Natural killer cell (primary cell): ENCODE measurements at regions of chr11 and their contacts with region 1.

Region 1: DNA sequence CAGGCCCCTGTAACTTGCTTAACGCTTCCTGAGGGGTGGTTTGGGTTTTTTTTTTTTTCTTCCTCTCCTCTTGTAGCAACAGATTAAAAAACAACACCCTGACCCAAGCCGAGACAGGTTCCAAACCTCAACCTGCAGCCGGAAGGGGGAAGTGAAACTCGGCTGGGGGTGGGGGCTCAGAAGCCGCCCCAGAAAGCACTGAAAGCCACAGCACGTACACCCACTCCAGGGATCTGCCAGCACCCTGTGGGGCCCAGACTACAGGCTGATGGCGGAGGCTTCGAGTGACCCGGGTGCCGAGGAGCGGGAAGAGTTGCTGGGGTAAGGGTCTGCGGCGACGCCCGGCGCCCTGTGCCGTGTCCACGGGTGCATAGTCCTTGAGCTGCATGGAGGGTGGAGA is at the start of gene LSP1:
- DNase-seq: peak; percentile 76 to 93
- ATAC-seq: peak; percentile 57 to 77 (median 71)
- H3K4me3 ChIP-seq: peak within 1 kb of the TSS; percentile 91
- H3K4me3 Mint-ChIP-seq: peak within 1 kb of the TSS; percentile 100
- H3K27ac ChIP-seq: peak within 1 kb of the TSS; percentile 94
- H3K27ac Mint-ChIP-seq: peak within 1 kb of the TSS; percentile 98 to 99
- H3K4me1 ChIP-seq: peaks cover 92% of the 10 kb centered on the region
- H3K4me1 Mint-ChIP-seq: peaks cover 43 to 74% of the 10 kb centered on the region in 2 donors
- H3K27me3 ChIP-seq: no peaks in the 10 kb centered on the region
- H3K27me3 Mint-ChIP-seq: no peaks in the 10 kb centered on the region
- CTCF ChIP-seq: no peak
- total RNA-seq, gene LSP1: 487 to 595 (median 536) TPM

Region 2: DNA sequence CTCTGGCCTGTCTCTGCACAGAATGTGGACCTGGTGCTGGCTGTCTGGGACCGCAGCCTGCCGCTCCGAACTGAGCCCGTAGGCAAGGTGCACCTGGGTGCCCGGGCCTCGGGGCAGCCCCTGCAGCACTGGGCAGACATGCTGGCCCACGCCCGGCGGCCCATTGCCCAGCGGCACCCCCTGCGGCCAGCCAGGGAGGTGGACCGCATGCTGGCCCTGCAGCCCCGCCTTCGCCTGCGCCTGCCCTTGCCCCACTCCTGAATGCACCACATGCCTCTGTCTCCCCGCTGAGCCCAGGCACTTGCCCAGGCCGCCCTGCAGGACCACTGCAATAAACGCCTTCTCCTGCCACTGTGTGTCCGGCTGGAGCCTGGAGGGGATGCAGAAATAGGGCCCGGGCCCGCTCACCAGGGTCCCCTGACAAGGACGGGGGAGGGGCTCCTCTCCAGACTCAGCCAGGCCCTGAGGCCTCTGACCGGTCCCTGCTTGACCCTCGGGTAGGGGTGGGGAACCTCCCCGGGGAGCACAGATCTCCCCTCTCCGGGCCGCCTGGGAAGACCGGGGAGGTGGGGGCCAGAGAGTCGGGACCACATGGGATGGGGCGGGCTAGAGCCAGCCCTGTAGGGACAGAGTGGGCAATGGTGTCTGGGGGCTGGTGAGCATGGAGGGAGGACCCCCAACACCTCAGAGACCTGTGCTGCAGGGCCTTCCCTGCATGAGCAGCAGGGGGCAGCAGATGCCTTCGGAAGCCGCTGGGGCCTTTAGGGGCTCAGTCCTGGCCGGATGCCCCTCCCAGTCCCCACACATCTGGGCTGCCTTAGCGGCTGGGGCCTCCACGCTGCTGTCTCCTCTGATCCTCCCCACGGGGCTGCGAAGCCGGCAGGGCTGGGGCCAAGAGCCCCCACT is 15.5 kb before region 1 on chr11:
- intact Hi-C with region 1: loop called (anchors 2 kb)
- DNase-seq: peak; percentile 80 to 91
- ATAC-seq: peak; percentile 89 to 96 (median 92)
- H3K4me3 ChIP-seq: no peak overlapping the region
- H3K4me3 Mint-ChIP-seq: no peak overlapping the region
- H3K27ac ChIP-seq: no peak overlapping the region
- H3K27ac Mint-ChIP-seq: no peak overlapping the region
- H3K4me1 ChIP-seq: peaks cover 54% of the 10 kb centered on the region
- H3K4me1 Mint-ChIP-seq: peaks cover 0 to 20% of the 10 kb centered on the region in 2 donors
- H3K27me3 ChIP-seq: no peaks in the 10 kb centered on the region
- H3K27me3 Mint-ChIP-seq: peaks cover 0 to 6% of the 10 kb centered on the region in 2 donors
- CTCF ChIP-seq: peak; percentile 98

Region 3: GRCh38 chr11:1870721-1871466 is 18.0 kb after region 1 on chr11:
- intact Hi-C with region 1: loop called (anchors 2 kb)
- DNase-seq: peak in 1 of 2 donors; percentile 80
- ATAC-seq: peak; percentile 68 to 76 (median 74)
- H3K4me3 ChIP-seq: peak overlapping the region; percentile 13
- H3K4me3 Mint-ChIP-seq: peak overlapping the region; percentile 93
- H3K27ac ChIP-seq: peak overlapping the region; percentile 48
- H3K27ac Mint-ChIP-seq: peak overlapping the region; percentile 82 to 88
- H3K4me1 ChIP-seq: peaks cover 94% of the 10 kb centered on the region
- H3K4me1 Mint-ChIP-seq: peaks cover 48 to 71% of the 10 kb centered on the region in 2 donors
- H3K27me3 ChIP-seq: no peaks in the 10 kb centered on the region
- H3K27me3 Mint-ChIP-seq: no peaks in the 10 kb centered on the region
- CTCF ChIP-seq: no peak

Region 4: GRCh38 chr11:1889224-1890120 is 36.6 kb after region 1 on chr11:
- intact Hi-C with region 1: loop called (anchors 2 kb)
- DNase-seq: peak; percentile 77 to 88
- ATAC-seq: peak; percentile 64 to 85 (median 81)
- H3K4me3 ChIP-seq: peak overlapping the region; percentile 36
- H3K4me3 Mint-ChIP-seq: peak overlapping the region; percentile 79
- H3K27ac ChIP-seq: peak overlapping the region; percentile 59
- H3K27ac Mint-ChIP-seq: peak overlapping the region in 1 of 2 donors; percentile 82
- H3K4me1 ChIP-seq: peaks cover 55% of the 10 kb centered on the region
- H3K4me1 Mint-ChIP-seq: peaks cover 20 to 69% of the 10 kb centered on the region in 2 donors
- H3K27me3 ChIP-seq: no peaks in the 10 kb centered on the region
- H3K27me3 Mint-ChIP-seq: no peaks in the 10 kb centered on the region
- CTCF ChIP-seq: no peak

Region 5: GRCh38 chr11:1988667-1989317 is 135.9 kb after region 1 on chr11:
- intact Hi-C with region 1: no loop called
- DNase-seq: no peak
- ATAC-seq: no peak
- H3K4me3 ChIP-seq: no peak overlapping the region
- H3K4me3 Mint-ChIP-seq: no peak overlapping the region
- H3K27ac ChIP-seq: no peak overlapping the region
- H3K27ac Mint-ChIP-seq: no peak overlapping the region
- H3K4me1 ChIP-seq: no peaks in the 10 kb centered on the region
- H3K4me1 Mint-ChIP-seq: no peaks in the 10 kb centered on the region
- H3K27me3 ChIP-seq: no peaks in the 10 kb centered on the region
- H3K27me3 Mint-ChIP-seq: peaks cover 0 to 2% of the 10 kb centered on the region in 2 donors
- CTCF ChIP-seq: no peak

Region 6: DNA sequence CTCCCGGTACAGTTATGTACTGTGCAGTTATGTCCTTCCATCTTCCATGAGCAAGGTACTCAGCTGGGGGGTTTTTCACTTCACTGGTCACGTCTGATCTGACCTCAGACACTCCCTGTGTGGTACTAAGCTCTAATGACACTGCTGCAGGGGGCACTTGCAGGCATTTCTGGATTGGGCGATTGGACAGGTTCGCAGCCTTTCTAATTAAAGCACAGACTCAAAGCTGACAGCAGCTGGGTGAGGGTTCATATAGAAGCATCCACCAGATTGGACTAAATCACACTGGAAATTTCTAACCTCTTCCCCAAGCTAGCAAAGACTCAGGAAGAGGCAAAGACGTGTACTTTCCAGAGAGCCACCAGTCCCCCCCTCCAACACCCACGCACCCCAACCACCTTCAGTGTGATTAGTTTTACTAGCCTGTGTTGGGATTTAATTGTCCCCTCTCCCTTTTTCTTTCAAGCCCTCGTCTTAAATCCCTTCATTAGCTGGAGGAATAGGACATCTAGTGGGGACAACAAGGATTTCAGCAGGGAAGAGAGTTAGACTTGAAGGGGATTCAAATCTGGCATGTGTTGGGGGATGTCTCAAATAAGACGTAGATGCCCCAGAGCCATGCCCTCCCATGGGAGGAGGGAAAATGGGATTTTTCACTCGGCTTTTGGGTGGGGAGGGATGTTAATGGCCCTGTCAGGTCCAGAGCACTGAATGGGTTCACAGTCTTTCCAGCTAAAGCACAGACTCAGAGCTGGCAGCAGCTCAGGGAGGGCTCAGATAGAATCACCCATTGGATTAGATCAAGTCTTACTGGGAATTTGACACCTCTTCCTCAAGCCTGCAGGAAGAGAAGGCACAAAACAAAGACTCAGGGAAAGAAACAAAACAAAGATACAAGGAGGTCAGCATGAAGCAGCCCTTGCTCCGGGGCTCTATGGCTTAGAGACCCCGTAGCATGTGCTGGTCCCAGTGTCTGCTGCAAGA is 297.3 kb after region 1 on chr11:
- intact Hi-C with region 1: no loop called
- DNase-seq: no peak
- ATAC-seq: no peak
- H3K4me3 ChIP-seq: no peak overlapping the region
- H3K4me3 Mint-ChIP-seq: no peak overlapping the region
- H3K27ac ChIP-seq: no peak overlapping the region
- H3K27ac Mint-ChIP-seq: no peak overlapping the region
- H3K4me1 ChIP-seq: peaks cover 7% of the 10 kb centered on the region
- H3K4me1 Mint-ChIP-seq: peaks cover 9 to 10% of the 10 kb centered on the region in 2 donors
- H3K27me3 ChIP-seq: peaks cover 27% of the 10 kb centered on the region
- H3K27me3 Mint-ChIP-seq: peaks cover 30 to 47% of the 10 kb centered on the region in 2 donors
- CTCF ChIP-seq: no peak